Posterior vena cava (tissue), 2 donors: ENCODE measurements at regions of chr14 and their contacts with region 1.

Region 1: DNA sequence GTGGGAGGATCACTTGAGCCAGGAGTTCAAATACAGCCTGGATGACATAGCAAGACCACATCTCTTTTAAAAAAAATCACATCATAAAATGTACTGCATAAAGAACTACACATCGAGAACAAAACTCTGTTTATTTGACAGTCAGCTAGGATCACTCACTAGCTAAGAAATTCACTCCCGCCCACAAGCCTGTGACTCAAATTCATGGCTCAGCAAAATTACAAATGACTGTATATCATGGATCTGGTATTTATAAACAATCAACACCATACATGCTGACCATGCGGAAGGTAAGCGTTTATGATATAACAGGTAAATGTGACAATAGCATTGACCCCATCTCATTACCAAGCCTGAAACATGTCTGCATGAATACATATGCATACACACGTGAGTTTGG is 206.5 kb downstream of the EFCAB11 start:
- DNase-seq: no peak

Region 2: GRCh38 chr14:88228522-88229236 is 1519.3 kb before region 1 on chr14:
- intact Hi-C with region 1: loop called in 1 of 2 experiments (anchors 10 kb)
- DNase-seq: no peak

Region 3: GRCh38 chr14:89576145-89576927 is 171.7 kb before region 1 on chr14:
- intact Hi-C with region 1: no loop called
- DNase-seq: no peak